ENCODE measurements at regions of chr10 and their contacts with region 1.

Region 1: DNA sequence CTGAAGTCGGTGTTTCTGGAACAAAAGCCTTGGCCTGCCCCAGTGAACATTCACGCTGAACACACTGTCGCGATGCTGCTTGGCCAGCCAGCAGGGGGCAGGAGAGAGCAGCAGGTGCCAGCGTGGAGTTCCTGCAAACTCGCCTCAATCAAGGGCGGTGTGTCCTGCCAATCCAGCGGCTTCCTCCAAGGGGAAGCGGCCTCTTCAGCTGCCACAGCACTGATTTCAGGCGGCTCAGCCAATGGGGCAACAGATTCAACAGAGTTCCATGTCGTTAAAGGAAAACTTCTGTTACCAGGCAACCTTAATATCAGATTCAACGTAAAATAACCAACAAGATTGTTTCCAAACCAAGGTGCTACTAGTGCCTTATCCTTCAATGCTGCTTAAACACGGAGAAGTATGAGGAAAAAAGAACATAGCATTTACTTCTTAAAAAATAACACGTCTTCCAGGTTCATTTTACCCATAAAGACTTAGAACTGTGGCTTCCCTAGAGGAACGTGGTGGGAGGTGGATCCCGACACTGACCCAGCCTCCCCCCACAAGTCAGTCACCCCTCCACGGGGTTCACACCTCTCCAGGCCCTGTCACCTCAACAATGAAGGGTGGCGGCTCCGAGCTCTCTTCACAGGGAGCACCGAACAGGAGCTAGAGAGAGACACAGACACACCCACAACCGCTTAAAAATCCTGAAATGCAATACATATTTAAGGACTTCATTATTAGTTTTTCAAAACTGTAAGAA is 178.2 kb downstream of the DIP2C start:
- DNase-seq: peak; percentile 81
- H3K4me3 Mint-ChIP-seq: no peak overlapping the region
- H3K27ac Mint-ChIP-seq: no peak overlapping the region
- H3K4me1 Mint-ChIP-seq: peaks cover 7% of the 10 kb centered on the region
- H3K27me3 Mint-ChIP-seq: peaks cover 16% of the 10 kb centered on the region
- CTCF ChIP-seq: peak; percentile 93

Region 2: GRCh38 chr10:178208-178607 is 333.1 kb before region 1 on chr10:
- CTCF ChIA-PET with region 1: no interaction called
- POLR2A ChIA-PET with region 1: no interaction called
- intact Hi-C with region 1: loop called (anchors 5 kb)
- DNase-seq: peak; percentile 34
- H3K4me3 Mint-ChIP-seq: no peak overlapping the region
- H3K27ac Mint-ChIP-seq: peak overlapping the region; percentile 59
- H3K4me1 Mint-ChIP-seq: no peaks in the 10 kb centered on the region
- H3K27me3 Mint-ChIP-seq: no peaks in the 10 kb centered on the region
- CTCF ChIP-seq: peak; percentile 37

Region 3: DNA sequence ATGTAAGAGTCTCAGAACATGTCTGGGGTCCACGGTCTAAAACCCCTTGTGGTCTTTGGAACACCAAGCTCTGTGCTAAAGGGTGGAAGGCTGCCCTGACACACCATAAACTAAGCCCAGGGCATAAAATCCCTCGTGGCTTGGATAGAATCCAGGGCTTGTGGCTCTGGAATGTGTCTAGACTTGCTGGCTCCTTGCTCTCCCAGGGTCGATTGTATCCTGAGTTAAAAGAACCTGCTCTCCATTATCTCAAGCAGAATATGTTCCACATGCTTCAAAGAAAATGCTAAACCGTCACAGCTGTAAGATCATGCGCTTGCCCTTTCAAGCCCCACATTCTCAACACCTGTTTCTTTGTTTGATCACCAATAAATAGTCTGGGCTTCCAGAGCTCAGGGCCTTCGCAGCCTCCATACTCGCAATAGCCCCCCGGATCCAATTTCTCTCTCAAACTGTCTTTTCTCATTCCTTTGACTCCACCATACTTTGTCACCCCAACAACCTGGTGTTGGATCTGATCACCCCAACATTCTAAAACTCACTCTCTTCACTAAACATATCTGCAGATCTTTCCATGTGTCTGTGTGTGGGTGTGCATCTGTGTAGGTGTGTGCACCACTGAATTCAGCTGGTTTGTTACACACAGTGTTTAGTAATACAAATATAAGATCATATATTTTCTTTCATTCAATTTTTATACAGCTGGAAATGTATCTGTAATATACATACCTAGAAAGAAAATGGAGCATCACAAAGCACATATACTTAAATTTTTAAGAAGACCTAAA is 137.6 kb before region 1 on chr10:
- CTCF ChIA-PET with region 1: no interaction called
- POLR2A ChIA-PET with region 1: no interaction called
- intact Hi-C with region 1: no loop called
- DNase-seq: peak; percentile 34
- H3K4me3 Mint-ChIP-seq: no peak overlapping the region
- H3K27ac Mint-ChIP-seq: peak overlapping the region; percentile 21
- H3K4me1 Mint-ChIP-seq: peaks cover 14% of the 10 kb centered on the region
- H3K27me3 Mint-ChIP-seq: no peaks in the 10 kb centered on the region
- CTCF ChIP-seq: no peak

Region 4: GRCh38 chr10:404346-404745 is 106.9 kb before region 1 on chr10:
- CTCF ChIA-PET with region 1: no interaction called
- POLR2A ChIA-PET with region 1: no interaction called
- intact Hi-C with region 1: no loop called
- DNase-seq: peak; percentile 30
- H3K4me3 Mint-ChIP-seq: no peak overlapping the region
- H3K27ac Mint-ChIP-seq: no peak overlapping the region
- H3K4me1 Mint-ChIP-seq: no peaks in the 10 kb centered on the region
- H3K27me3 Mint-ChIP-seq: peaks cover 16% of the 10 kb centered on the region
- CTCF ChIP-seq: no peak

Region 5: GRCh38 chr10:525565-526315 is 14.5 kb after region 1 on chr10:
- CTCF ChIA-PET with region 1: interaction called, 12 read pairs
- POLR2A ChIA-PET with region 1: no interaction called
- intact Hi-C with region 1: no loop called
- DNase-seq: peak; percentile 8
- H3K4me3 Mint-ChIP-seq: no peak overlapping the region
- H3K27ac Mint-ChIP-seq: no peak overlapping the region
- H3K4me1 Mint-ChIP-seq: peaks cover 9% of the 10 kb centered on the region
- H3K27me3 Mint-ChIP-seq: peaks cover 22% of the 10 kb centered on the region
- CTCF ChIP-seq: no peak

Region 6: GRCh38 chr10:588241-589165 is 77.2 kb after region 1 on chr10:
- CTCF ChIA-PET with region 1: no interaction called
- POLR2A ChIA-PET with region 1: no interaction called
- intact Hi-C with region 1: no loop called
- DNase-seq: peak; percentile 13
- H3K4me3 Mint-ChIP-seq: no peak overlapping the region
- H3K27ac Mint-ChIP-seq: no peak overlapping the region
- H3K4me1 Mint-ChIP-seq: no peaks in the 10 kb centered on the region
- H3K27me3 Mint-ChIP-seq: peaks cover 54% of the 10 kb centered on the region
- CTCF ChIP-seq: no peak

Region 7: DNA sequence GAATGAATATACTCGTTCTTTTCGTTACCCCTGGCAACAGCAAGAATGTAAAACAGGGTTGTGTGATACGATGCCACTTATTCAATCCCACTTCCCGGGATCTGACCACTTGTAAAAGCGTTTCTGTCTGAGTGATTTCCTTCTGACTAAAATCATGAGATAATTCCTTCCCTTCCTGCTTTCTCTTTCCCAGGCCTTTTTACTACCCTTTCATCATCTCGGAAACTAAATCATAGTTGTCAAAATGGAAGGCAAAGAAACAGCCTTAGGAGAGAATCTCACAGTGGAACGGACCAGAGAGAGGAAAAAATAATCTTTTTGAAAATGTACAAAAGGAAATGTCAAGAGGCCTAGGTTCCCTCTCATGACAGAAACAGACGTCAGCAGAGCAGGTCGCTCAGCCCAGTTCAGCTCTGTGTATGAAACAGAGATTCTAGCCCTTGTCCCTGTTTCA is 148.4 kb after region 1 on chr10:
- CTCF ChIA-PET with region 1: no interaction called
- POLR2A ChIA-PET with region 1: no interaction called
- intact Hi-C with region 1: no loop called
- DNase-seq: no peak
- H3K4me3 Mint-ChIP-seq: no peak overlapping the region
- H3K27ac Mint-ChIP-seq: no peak overlapping the region
- H3K4me1 Mint-ChIP-seq: no peaks in the 10 kb centered on the region
- H3K27me3 Mint-ChIP-seq: no peaks in the 10 kb centered on the region
- CTCF ChIP-seq: no peak

Region 8: DNA sequence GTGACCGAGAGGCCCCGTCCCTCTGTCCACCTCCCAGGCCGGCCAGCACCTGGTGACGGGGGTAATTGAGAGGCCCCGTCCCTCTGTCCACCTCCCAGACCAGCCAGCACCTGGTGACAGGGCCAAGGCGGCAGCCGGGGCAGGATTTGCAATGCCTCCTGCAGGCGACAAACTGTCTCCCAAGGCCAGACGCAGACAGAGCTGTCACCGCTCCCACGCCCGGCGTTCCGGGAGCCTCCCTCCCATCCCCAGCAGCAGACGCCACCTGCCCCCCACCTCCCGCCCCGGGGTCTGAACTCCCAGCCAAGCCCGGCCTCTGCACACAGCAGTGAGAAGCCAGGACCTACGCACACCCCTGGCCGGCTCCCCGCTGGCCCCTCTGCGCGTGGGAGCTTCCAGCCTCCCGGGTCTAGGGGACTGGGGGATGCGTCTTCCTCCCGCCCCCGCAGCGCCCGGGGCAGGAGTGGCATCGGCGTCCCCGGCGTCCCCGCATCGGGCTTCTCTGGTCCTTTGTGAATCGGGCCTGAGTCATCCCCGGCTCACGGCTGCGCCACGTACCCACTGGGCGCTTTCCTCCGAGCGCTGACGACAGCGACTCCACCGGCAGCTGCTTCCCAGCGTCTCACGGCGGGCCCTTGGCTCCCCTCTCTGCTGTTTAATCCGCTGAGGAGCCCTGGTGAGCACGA is 273.3 kb after region 1 on chr10:
- CTCF ChIA-PET with region 1: interaction called, 13 read pairs
- POLR2A ChIA-PET with region 1: no interaction called
- intact Hi-C with region 1: loop called (anchors 5 kb)
- DNase-seq: peak; percentile 60
- H3K4me3 Mint-ChIP-seq: peak overlapping the region; percentile 21
- H3K27ac Mint-ChIP-seq: no peak overlapping the region
- H3K4me1 Mint-ChIP-seq: no peaks in the 10 kb centered on the region
- H3K27me3 Mint-ChIP-seq: no peaks in the 10 kb centered on the region
- CTCF ChIP-seq: peak; percentile 6

Measured in MCF 10A (cell line).